ENCODE measurements at regions of chr1 and their contacts with region 1.

Region 1: GRCh38 chr1:150072959-150073358 is 5.4 kb downstream of the VPS45 start:
- DNase-seq: no peak
- H3K4me3 ChIP-seq: no peak overlapping the region
- H3K27ac ChIP-seq: no peak overlapping the region
- H3K4me1 ChIP-seq: peaks cover 0 to 15% (median 5%) of the 10 kb centered on the region in 4 donors
- H3K27me3 ChIP-seq: no peaks in the 10 kb centered on the region
- CTCF ChIP-seq: peak; percentile 24 to 34 (median 34)
- EP300 ChIP-seq: no peak
- POLR2A ChIP-seq: no peak

Region 2: GRCh38 chr1:149886396-149887195 is 186.4 kb before region 1 on chr1:
- in situ Hi-C with region 1: no loop called
- intact Hi-C with region 1: no loop called
- DNase-seq: peak; percentile 88
- H3K4me3 ChIP-seq: peak overlapping the region; percentile 61 to 81 (median 66)
- H3K27ac ChIP-seq: peak overlapping the region; percentile 97 to 100 (median 98)
- H3K4me1 ChIP-seq: peaks cover 0 to 25% (median 13%) of the 10 kb centered on the region in 4 donors
- H3K27me3 ChIP-seq: no peaks in the 10 kb centered on the region
- CTCF ChIP-seq: peak in 2 of 5 experiments; percentile 17 to 25
- EP300 ChIP-seq: peak; percentile 52
- POLR2A ChIP-seq: peak; percentile 100

Region 3: DNA sequence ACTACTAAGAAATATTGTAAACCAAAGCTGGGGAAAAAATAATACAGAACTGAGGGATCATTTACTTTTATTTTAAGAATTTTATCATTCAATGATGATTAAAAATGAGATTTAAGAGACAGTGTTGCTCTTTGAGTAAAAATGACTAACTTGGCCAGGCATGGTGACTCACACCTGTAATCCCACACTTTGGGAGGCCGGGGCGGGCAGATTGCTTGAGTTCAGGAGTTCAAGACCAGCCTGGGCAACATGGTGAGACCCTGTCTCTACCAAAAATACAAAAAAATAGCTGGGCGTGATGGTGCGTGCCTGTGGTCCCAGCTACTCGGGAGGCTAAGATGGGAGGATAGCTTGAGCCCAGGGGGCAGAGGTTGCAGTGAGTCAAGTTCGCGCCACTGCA is 54.9 kb after region 1 on chr1:
- in situ Hi-C with region 1: no loop called
- intact Hi-C with region 1: no loop called
- DNase-seq: no peak
- H3K4me3 ChIP-seq: no peak overlapping the region
- H3K27ac ChIP-seq: no peak overlapping the region
- H3K4me1 ChIP-seq: peaks cover 0 to 3% (median 0%) of the 10 kb centered on the region in 4 donors
- H3K27me3 ChIP-seq: no peaks in the 10 kb centered on the region
- CTCF ChIP-seq: no peak
- EP300 ChIP-seq: no peak
- POLR2A ChIP-seq: no peak

Region 4: GRCh38 chr1:150162862-150163706 is 90.1 kb after region 1 on chr1:
- in situ Hi-C with region 1: loop called in 3 of 4 experiments (anchors 5 to 25 kb)
- intact Hi-C with region 1: no loop called
- DNase-seq: peak; percentile 81
- H3K4me3 ChIP-seq: peak overlapping the region in 1 of 4 donors; percentile 35
- H3K27ac ChIP-seq: peak overlapping the region; percentile 92 to 96 (median 94)
- H3K4me1 ChIP-seq: peaks cover 33 to 73% (median 47%) of the 10 kb centered on the region in 4 donors
- H3K27me3 ChIP-seq: no peaks in the 10 kb centered on the region
- CTCF ChIP-seq: peak in 3 of 5 experiments; percentile 23 to 41 (median 27)
- EP300 ChIP-seq: no peak
- POLR2A ChIP-seq: peak; percentile 73

Region 5: DNA sequence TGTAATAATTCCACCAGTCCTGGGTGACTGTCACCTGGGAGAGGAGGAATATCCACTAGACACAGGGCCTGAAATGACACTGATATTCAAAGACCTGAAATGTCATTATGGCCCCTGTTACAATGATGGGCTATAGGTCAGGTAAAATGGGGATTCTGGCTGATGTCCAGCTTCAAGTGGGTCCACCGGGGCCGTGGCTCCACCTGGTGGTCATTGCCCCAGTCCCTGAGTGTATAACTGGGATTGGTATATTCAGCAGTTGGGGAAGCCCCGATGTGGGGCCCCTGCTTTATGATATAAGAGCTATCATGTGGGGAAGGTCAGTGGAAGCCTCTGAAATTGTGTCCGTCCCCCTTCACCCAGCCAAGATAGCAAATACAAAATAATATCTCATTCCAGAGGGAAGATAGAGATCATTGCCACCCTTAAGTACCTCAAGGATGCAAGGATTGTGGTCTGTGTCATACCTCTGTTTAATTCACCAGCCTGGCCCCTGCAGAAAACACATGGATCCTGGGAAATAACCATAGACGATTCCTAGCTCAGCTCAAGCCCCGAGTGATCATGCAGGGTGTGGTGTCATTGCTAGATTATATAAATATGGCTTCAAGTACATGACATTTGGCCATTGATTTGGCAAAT is 96.1 kb after region 1 on chr1:
- in situ Hi-C with region 1: loop called in 3 of 4 experiments (anchors 5 to 25 kb)
- intact Hi-C with region 1: no loop called
- DNase-seq: peak; percentile 74
- H3K4me3 ChIP-seq: no peak overlapping the region
- H3K27ac ChIP-seq: no peak overlapping the region
- H3K4me1 ChIP-seq: peaks cover under 1 to 19% (median 8%) of the 10 kb centered on the region in 4 donors
- H3K27me3 ChIP-seq: no peaks in the 10 kb centered on the region
- CTCF ChIP-seq: peak; percentile 65 to 83 (median 72)
- EP300 ChIP-seq: no peak
- POLR2A ChIP-seq: no peak

Region 6: GRCh38 chr1:150186789-150187559 is 114.0 kb after region 1 on chr1:
- in situ Hi-C with region 1: loop called in 1 of 4 experiments (anchors 10 kb)
- intact Hi-C with region 1: no loop called
- DNase-seq: no peak
- H3K4me3 ChIP-seq: no peak overlapping the region
- H3K27ac ChIP-seq: peak overlapping the region; percentile 19 to 51 (median 27)
- H3K4me1 ChIP-seq: no peaks in the 10 kb centered on the region
- H3K27me3 ChIP-seq: no peaks in the 10 kb centered on the region
- CTCF ChIP-seq: peak; percentile 44 to 56 (median 54)
- EP300 ChIP-seq: no peak
- POLR2A ChIP-seq: no peak

Region 7: DNA sequence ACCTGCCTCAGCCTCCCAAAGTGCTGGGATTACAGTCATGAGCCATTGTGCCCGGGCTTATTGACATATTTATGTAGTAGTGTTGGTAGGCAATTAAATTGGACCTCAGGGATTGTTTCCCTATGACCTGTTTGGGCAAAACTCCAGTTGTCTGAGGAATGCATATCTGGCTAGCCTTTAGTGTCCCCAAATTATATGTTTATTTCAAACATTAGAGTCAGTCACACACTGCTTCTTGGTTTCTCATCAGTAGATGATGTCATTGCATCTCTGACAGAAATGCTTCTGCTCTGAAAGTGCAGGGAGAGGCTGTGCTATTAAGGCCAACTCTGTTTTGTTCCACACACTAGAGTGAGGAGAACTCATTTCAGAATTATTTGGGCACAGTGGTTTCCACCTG is 1137.9 kb after region 1 on chr1:
- in situ Hi-C with region 1: no loop called
- intact Hi-C with region 1: loop called (anchors 5 kb)
- DNase-seq: no peak
- H3K4me3 ChIP-seq: no peak overlapping the region
- H3K27ac ChIP-seq: no peak overlapping the region
- H3K4me1 ChIP-seq: peaks cover 0 to 9% (median 0%) of the 10 kb centered on the region in 4 donors
- H3K27me3 ChIP-seq: no peaks in the 10 kb centered on the region
- CTCF ChIP-seq: no peak
- EP300 ChIP-seq: no peak
- POLR2A ChIP-seq: no peak

Measured in transverse colon (tissue), 4 donors.